OCI-LY7 (cell line): ENCODE measurements at regions of chr6 and their contacts with region 1.

Region 1: GRCh38 chr6:136249811-136250685 is at the start of gene MTFR2:
- DNase-seq: peak; percentile 99
- H3K4me3 ChIP-seq: peak within 1 kb of the TSS; percentile 92
- H3K27ac ChIP-seq: peak within 1 kb of the TSS; percentile 46
- H3K4me1 ChIP-seq: peaks cover 9% of the 10 kb centered on the region
- CTCF ChIP-seq: no peak
- total RNA-seq, gene MTFR2: 9.3 and 10.4 TPM in 2 replicates

Region 2: GRCh38 chr6:136289579-136290409 is 39.7 kb after region 1 on chr6 and contains the start of gene BCLAF1:
- CTCF ChIA-PET with region 1: interaction called, 3 read pairs
- POLR2A ChIA-PET with region 1: interaction called, 99 read pairs
- intact Hi-C with region 1: loop called (anchors 1 kb)
- DNase-seq: peak; percentile 99
- H3K4me3 ChIP-seq: peak within 1 kb of the TSS; percentile 88
- H3K27ac ChIP-seq: peak within 1 kb of the TSS; percentile 97
- H3K4me1 ChIP-seq: peaks cover 42% of the 10 kb centered on the region
- CTCF ChIP-seq: peak; percentile 34; the same call in 1 of the 2 replicates
- total RNA-seq, gene BCLAF1: 130 and 228 TPM in 2 replicates